ENCODE measurements at regions of chr14 and their contacts with region 1.

Region 1: GRCh38 chr14:90677484-90678050 is 138.7 kb downstream of the TTC7B start:
- DNase-seq: peak; percentile 34 to 57 (median 51)
- H3K4me3 ChIP-seq: peak overlapping the region in 1 of 3 experiments; percentile 22
- H3K4me3 Mint-ChIP-seq: no peak overlapping the region
- H3K27ac ChIP-seq: peak overlapping the region in 1 of 2 donors; percentile 62
- H3K27ac Mint-ChIP-seq: peak overlapping the region; percentile 20 to 88 (median 66)
- H3K4me1 ChIP-seq: peaks cover 37 to 71% of the 10 kb centered on the region in 2 donors
- H3K4me1 Mint-ChIP-seq: peaks cover 76% of the 10 kb centered on the region
- H3K27me3 ChIP-seq: no peaks in the 10 kb centered on the region
- H3K27me3 Mint-ChIP-seq: peaks cover 0 to 2% (median 2%) of the 10 kb centered on the region in 3 donors
- CTCF ChIP-seq: no peak

Region 2: DNA sequence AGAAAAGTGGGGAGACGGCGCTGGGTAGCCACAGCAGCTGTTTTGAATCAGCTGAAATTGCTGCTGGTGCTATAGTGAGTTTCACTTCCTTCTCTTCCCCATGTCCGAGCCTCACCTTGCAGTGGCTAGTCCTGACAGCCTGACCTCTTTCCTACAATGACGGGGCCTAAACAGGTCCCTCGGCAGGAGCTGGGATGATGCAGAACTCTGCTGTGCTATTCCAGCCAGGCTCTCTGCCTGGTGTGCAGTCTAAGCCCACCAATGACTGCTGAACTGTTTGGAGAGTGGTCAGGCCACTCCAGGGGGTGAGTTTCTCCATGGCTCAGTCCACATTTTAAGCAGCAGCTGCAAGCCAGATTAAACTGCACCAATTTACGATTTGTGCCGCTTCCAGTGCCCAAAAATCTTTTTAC is 68.6 kb before region 1 on chr14:
- intact Hi-C with region 1: loop called in 1 of 2 experiments (anchors 5 kb)
- DNase-seq: peak; percentile 39 to 63 (median 58)
- H3K4me3 ChIP-seq: peak overlapping the region in 1 of 3 experiments; percentile 45
- H3K4me3 Mint-ChIP-seq: peak overlapping the region in 1 of 2 donors; percentile 80
- H3K27ac ChIP-seq: peak overlapping the region in 1 of 2 donors; percentile 37
- H3K27ac Mint-ChIP-seq: peak overlapping the region; percentile 54 to 87 (median 72)
- H3K4me1 ChIP-seq: peaks cover 52 to 60% of the 10 kb centered on the region in 2 donors
- H3K4me1 Mint-ChIP-seq: peaks cover 66% of the 10 kb centered on the region
- H3K27me3 ChIP-seq: no peaks in the 10 kb centered on the region
- H3K27me3 Mint-ChIP-seq: peaks cover 0 to 2% (median 0%) of the 10 kb centered on the region in 3 donors
- CTCF ChIP-seq: no peak

Region 3: DNA sequence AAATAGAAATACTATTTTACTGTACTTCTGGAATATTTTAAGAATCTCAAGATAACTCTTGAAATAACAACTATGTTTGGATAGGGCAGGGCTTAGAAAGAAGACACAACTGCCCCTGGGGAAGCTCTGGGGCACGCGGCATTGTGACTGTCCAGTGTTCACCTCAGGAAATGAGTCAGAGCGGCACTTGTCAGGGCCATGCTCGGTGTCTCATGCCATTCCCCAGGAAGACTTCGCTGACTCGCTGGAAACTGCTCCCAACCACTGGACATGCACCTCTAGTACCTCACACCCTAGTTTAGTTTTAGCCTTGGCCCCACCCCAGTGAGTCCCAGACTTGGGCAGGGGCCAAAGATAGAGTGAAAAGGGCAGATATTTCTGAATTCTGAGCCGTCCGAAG is 53.3 kb before region 1 on chr14:
- intact Hi-C with region 1: loop called in 1 of 2 experiments (anchors 10 kb)
- DNase-seq: peak; percentile 86 to 89 (median 86)
- H3K4me3 ChIP-seq: no peak overlapping the region
- H3K4me3 Mint-ChIP-seq: peak overlapping the region in 1 of 2 donors; percentile 68
- H3K27ac ChIP-seq: peak overlapping the region in 1 of 2 donors; percentile 60
- H3K27ac Mint-ChIP-seq: peak overlapping the region; percentile 73 to 92 (median 90)
- H3K4me1 ChIP-seq: peaks cover 28 to 45% of the 10 kb centered on the region in 2 donors
- H3K4me1 Mint-ChIP-seq: peaks cover 43% of the 10 kb centered on the region
- H3K27me3 ChIP-seq: no peaks in the 10 kb centered on the region
- H3K27me3 Mint-ChIP-seq: peaks cover 1 to 12% (median 2%) of the 10 kb centered on the region in 3 donors
- CTCF ChIP-seq: no peak

Region 4: DNA sequence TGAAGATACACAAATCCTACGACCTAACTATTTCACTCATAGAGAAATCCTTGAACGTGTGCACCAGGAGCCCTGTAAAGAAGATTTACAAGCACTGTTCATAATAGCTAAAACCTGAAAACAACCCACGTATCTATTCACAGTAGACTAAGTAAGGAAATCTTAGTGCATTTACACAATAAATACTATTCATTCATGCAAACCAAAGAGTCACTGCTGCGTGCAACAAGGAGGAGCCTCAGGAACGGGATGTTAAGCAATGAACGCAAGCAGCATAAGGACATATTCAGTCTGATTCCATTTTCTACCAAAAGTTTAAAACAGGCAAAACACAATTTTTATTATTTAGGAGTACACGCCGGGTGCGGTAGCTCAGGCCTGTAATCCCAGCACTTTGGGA is 37.9 kb before region 1 on chr14:
- intact Hi-C with region 1: loop called in 1 of 2 experiments (anchors 5 kb)
- DNase-seq: peak; percentile 60 to 73 (median 67)
- H3K4me3 ChIP-seq: no peak overlapping the region
- H3K4me3 Mint-ChIP-seq: peak overlapping the region in 1 of 2 donors; percentile 39
- H3K27ac ChIP-seq: peak overlapping the region; percentile 45 to 86
- H3K27ac Mint-ChIP-seq: peak overlapping the region; percentile 81 to 96 (median 91)
- H3K4me1 ChIP-seq: peaks cover 34 to 67% of the 10 kb centered on the region in 2 donors
- H3K4me1 Mint-ChIP-seq: peaks cover 56% of the 10 kb centered on the region
- H3K27me3 ChIP-seq: no peaks in the 10 kb centered on the region
- H3K27me3 Mint-ChIP-seq: no peaks in the 10 kb centered on the region
- CTCF ChIP-seq: no peak

Region 5: DNA sequence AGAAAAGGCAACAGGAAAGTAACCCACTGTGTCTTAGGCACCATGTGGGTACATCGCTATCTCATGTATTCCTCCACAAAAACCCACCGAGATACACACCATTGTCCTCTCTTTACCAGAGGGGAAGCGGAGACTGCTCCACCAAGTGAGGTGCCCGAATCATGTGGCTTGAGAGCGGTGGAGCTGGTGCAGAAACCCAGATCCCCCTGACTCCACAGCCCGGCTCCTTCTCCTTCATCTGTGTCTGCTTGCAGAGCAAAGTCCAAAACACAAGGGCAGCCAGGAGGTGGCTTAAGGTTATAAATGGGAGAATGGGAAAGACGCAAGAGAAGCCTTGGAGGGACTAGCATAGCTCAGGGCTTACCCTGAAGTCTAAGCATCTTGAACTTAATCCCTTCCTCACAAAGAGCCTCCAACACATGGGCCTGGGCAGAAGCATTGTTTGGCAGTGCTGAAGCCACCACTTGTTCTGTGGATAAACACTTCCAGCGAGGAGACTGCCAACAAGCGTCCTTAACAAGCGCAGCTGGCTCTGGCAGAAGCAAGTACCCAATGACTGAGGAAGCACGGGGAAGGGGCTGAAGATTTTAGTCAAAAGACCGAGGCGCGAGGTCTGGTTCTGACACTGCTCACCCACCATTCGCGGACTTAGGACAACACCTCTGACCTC is 55.7 kb after region 1 on chr14:
- intact Hi-C with region 1: no loop called
- DNase-seq: no peak
- H3K4me3 ChIP-seq: no peak overlapping the region
- H3K4me3 Mint-ChIP-seq: no peak overlapping the region
- H3K27ac ChIP-seq: peak overlapping the region in 1 of 2 donors; percentile 77
- H3K27ac Mint-ChIP-seq: peak overlapping the region in 6 of 7 donors; percentile 80 to 94 (median 91)
- H3K4me1 ChIP-seq: peaks cover 24 to 28% of the 10 kb centered on the region in 2 donors
- H3K4me1 Mint-ChIP-seq: peaks cover 28% of the 10 kb centered on the region
- H3K27me3 ChIP-seq: no peaks in the 10 kb centered on the region
- H3K27me3 Mint-ChIP-seq: peaks cover 0 to 1% (median 0%) of the 10 kb centered on the region in 3 donors
- CTCF ChIP-seq: no peak